SK-N-SH (cell line): ENCODE measurements at regions of chr22 and their contacts with region 1.

Region 1: GRCh38 chr22:30089655-30089974 is 9.4 kb downstream of the HORMAD2 start:
- DNase-seq: no peak
- H3K4me3 ChIP-seq: no peak overlapping the region
- H3K27ac ChIP-seq: peak overlapping the region in 1 of 2 experiments; percentile 12; a peak in 1 of 4 replicates
- H3K4me1 ChIP-seq: no peaks in the 10 kb centered on the region
- H3K27me3 ChIP-seq: no peaks in the 10 kb centered on the region
- CTCF ChIP-seq: no peak
- EP300 ChIP-seq: no peak
- RAD21 ChIP-seq: no peak

Region 2: GRCh38 chr22:29593923-29594322 is 495.7 kb before region 1 on chr22:
- CTCF ChIA-PET with region 1: interaction called, 19 read pairs
- POLR2A ChIA-PET with region 1: no interaction called
- DNase-seq: no peak
- H3K4me3 ChIP-seq: no peak overlapping the region
- H3K27ac ChIP-seq: no peak overlapping the region
- H3K4me1 ChIP-seq: no peaks in the 10 kb centered on the region
- H3K27me3 ChIP-seq: no peaks in the 10 kb centered on the region
- CTCF ChIP-seq: no peak
- EP300 ChIP-seq: no peak
- RAD21 ChIP-seq: no peak

Region 3: DNA sequence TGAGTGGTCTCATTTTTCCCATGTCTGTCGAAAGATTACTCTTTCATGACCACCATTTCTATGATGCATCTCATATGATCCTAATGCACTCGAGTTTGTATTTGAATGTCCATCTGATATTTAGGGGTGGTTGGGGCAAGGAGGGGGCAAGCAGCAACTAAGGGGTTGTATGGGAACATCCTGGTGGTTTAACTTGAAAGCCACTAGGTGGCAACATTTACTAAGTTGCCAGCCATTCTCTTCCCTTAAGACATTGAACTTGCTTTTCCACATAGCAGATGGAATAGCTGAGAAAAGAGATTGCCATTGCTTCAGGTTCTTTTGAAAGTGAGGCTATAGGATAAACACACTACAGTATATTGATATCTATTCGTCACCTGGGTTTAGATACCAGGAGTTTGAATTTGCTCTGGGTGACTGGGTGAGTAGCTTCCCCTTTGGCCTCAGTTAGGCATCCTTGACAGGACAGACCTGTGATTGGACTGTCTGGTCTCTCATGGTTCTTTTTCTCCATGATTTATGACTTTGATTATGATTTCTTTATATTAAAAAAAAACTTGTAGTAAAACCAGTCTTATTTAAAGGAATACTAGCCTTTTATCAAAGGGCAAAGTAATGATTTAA is 453.8 kb before region 1 on chr22:
- CTCF ChIA-PET with region 1: interaction called, 70 read pairs
- POLR2A ChIA-PET with region 1: interaction called, 3 read pairs
- DNase-seq: peak; percentile 60
- H3K4me3 ChIP-seq: no peak overlapping the region; a peak in 1 of 4 replicates
- H3K27ac ChIP-seq: no peak overlapping the region
- H3K4me1 ChIP-seq: peaks cover 0 to 19% of the 10 kb centered on the region in 2 experiments; a peak in 2 of 4 replicates
- H3K27me3 ChIP-seq: no peaks in the 10 kb centered on the region
- CTCF ChIP-seq: peak; percentile 79
- EP300 ChIP-seq: no peak
- RAD21 ChIP-seq: peak; percentile 91

Region 4: GRCh38 chr22:30015846-30016245 is 73.8 kb before region 1 on chr22:
- CTCF ChIA-PET with region 1: interaction called, 10 read pairs
- POLR2A ChIA-PET with region 1: no interaction called
- DNase-seq: no peak
- H3K4me3 ChIP-seq: no peak overlapping the region
- H3K27ac ChIP-seq: peak overlapping the region; percentile 77 to 92; a peak in 3 of 4 replicates
- H3K4me1 ChIP-seq: peaks cover 10 to 21% of the 10 kb centered on the region in 2 experiments
- H3K27me3 ChIP-seq: no peaks in the 10 kb centered on the region
- CTCF ChIP-seq: no peak
- EP300 ChIP-seq: peak in 1 of 2 experiments; percentile 9; a peak in 1 of 4 replicates
- RAD21 ChIP-seq: no peak

Region 5: DNA sequence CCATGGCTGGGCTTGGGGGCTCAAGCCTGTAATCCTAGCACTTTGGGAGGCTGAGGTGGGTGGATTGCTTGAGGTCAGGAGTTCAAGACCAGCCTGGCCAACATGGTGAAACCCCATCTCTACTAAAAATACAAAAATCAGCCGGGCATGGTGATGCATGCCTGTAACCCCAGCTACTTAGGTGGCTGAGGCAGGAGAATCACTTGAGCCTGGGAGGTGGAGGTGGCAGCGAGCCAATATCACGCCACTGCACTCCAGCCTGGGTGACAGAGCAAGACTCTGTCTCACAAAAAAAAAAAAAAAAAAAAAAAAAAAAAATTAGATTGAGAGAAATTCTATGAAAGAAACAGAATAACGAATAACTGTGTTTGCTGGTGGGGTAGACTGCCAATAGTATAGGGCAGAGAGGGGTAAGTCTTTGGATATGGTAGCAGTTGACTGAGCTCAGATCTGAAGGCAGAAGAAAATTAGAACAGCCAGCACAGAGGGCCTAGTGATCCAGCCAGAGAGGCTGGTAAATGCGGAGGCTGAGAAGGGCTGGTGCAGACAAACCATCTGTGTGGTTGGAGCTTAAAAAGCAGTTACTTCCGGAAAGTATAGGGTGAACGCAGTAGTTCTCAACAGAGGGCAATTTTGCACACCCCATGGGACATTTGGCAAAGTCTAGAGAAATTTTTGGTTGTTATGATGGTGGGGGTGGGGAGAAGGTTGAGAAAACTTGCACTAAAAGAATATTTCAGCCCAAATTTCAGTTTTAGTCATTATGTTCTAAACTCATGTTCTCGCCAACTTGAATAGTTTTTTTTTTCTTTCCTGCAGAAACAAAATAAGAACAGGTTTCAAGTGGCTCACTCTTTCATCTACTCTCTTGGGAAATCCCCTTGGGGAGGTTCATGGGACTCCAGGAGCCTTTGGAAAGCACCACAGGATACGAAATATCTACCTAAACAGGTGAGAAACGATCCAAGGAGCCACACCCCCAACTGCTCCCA is 11.0 kb before region 1 on chr22:
- CTCF ChIA-PET with region 1: interaction called, 52 read pairs
- POLR2A ChIA-PET with region 1: no interaction called
- DNase-seq: no peak
- H3K4me3 ChIP-seq: no peak overlapping the region
- H3K27ac ChIP-seq: no peak overlapping the region
- H3K4me1 ChIP-seq: peaks cover 0 to 2% of the 10 kb centered on the region in 2 experiments; a peak in 1 of 4 replicates
- H3K27me3 ChIP-seq: peaks cover 21% of the 10 kb centered on the region; the same call in 1 of the 2 replicates
- CTCF ChIP-seq: no peak
- EP300 ChIP-seq: no peak
- RAD21 ChIP-seq: no peak